ENCODE measurements at regions of chr10 and their contacts with region 1.

Region 1: GRCh38 chr10:63481815-63482421 is 16.1 kb upstream of the JMJD1C start:
- DNase-seq: no peak
- ATAC-seq: no peak
- H3K4me3 ChIP-seq: no peak overlapping the region
- H3K4me3 Mint-ChIP-seq: no peak overlapping the region
- H3K27ac ChIP-seq: no peak overlapping the region
- H3K27ac Mint-ChIP-seq: no peak overlapping the region
- H3K4me1 ChIP-seq: no peaks in the 10 kb centered on the region
- H3K4me1 Mint-ChIP-seq: peaks cover 29 to 40% (median 37%) of the 10 kb centered on the region in 3 donors
- H3K27me3 ChIP-seq: no peaks in the 10 kb centered on the region
- H3K27me3 Mint-ChIP-seq: no peaks in the 10 kb centered on the region

Region 2: GRCh38 chr10:63464402-63465292 is 17.3 kb before region 1 on chr10:
- CTCF ChIA-PET with region 1: no interaction called
- POLR2A ChIA-PET with region 1: interaction called in 1 of 2 experiments, 13 read pairs
- DNase-seq: peak in 1 of 35 experiments; percentile 1
- ATAC-seq: peak; percentile 3 to 37 (median 30)
- H3K4me3 ChIP-seq: peak overlapping the region; percentile 97 to 98
- H3K4me3 Mint-ChIP-seq: peak overlapping the region; percentile 94 to 99 (median 94)
- H3K27ac ChIP-seq: no peak overlapping the region
- H3K27ac Mint-ChIP-seq: peak overlapping the region; percentile 11 to 48
- H3K4me1 ChIP-seq: peaks cover 6 to 8% of the 10 kb centered on the region in 2 experiments
- H3K4me1 Mint-ChIP-seq: peaks cover 25 to 36% (median 33%) of the 10 kb centered on the region in 3 donors
- H3K27me3 ChIP-seq: no peaks in the 10 kb centered on the region
- H3K27me3 Mint-ChIP-seq: no peaks in the 10 kb centered on the region

Region 3: GRCh38 chr10:63502832-63503231 is 20.9 kb after region 1 on chr10:
- CTCF ChIA-PET with region 1: no interaction called
- POLR2A ChIA-PET with region 1: interaction called in 1 of 2 experiments, 13 read pairs
- DNase-seq: no peak
- ATAC-seq: no peak
- H3K4me3 ChIP-seq: no peak overlapping the region
- H3K4me3 Mint-ChIP-seq: no peak overlapping the region
- H3K27ac ChIP-seq: no peak overlapping the region
- H3K27ac Mint-ChIP-seq: no peak overlapping the region
- H3K4me1 ChIP-seq: no peaks in the 10 kb centered on the region
- H3K4me1 Mint-ChIP-seq: peaks cover 30 to 38% (median 37%) of the 10 kb centered on the region in 3 donors
- H3K27me3 ChIP-seq: no peaks in the 10 kb centered on the region
- H3K27me3 Mint-ChIP-seq: no peaks in the 10 kb centered on the region

Measured in T-cell (primary cell).